HEK293T (cell line): ENCODE measurements at regions of chr5 and their contacts with region 1.

Region 1: DNA sequence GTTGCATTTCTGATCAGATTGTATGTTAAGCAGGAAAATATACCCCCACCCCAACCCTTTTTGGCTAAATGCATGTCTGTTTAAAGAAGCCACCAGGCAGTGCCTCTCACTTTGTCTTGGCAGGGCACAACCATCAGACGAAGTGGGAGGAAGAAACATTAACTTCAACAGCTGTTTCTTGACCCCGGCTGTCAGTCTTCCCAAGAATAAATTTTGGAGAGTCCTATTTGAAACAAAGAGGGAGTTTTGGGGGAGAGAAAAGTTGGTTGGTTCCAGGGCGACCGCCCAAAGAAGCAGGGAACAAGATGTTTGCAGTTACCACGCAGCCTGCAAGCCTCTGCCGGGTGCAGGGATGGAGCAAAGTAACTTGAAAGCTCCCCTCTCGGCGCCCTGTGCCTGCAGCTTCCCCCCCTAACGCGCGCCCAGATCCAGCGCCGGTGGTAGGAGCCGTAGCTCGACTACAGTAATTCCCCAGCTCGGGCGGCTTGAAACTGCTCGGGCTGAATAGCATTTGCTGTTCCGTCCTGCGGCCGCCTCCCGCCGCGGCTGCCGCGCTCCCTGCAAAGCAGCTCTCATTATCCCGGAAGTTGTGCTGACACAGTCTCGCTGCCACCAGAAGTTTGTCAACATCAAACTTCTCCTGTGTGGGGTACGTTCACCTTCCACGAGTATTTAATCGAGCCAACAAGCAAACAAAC is 100.7 kb upstream of the SSBP2 start:
- DNase-seq: peak; percentile 89

Region 2: DNA sequence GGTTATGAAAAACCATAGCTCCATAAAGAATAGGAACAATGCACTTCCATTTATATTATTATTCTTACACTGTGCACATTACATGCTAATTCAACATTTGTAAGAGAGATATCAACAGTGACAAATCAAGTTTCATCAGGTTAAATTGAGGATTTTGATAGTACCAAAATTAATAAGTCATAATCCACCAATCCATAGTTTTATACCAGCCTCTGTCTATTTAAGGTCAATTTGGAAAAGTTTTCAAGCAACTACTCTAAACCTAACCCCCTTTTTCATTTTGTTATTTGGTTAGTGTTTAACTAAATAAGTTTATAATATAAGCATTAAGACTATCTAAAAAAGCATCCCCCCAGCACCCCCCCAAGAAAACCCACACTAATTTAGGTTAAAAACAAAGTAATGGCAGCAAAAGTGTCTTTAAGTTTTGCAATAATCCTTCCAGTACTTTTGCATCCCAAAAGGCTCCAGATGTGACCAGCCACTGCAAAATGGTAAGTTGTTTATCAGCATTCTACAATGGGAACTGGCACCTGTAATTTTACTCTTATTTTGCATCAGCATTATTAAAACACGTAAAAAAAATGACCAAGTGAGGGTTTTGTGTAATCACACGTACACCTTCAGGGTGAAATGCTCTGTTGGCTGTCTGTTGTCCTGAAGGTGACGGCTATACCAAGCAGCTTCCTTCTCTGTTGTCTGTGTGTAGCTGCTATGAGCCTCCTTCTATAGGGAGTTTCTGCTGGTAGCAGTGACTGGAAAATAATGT is 64.0 kb before region 1 on chr5:
- CTCF ChIA-PET with region 1: interaction called, 5 read pairs
- POLR2A ChIA-PET with region 1: interaction called, 60 read pairs
- DNase-seq: no peak

Region 3: GRCh38 chr5:81838307-81838906 is 13.2 kb before region 1 on chr5:
- CTCF ChIA-PET with region 1: interaction called, 16 read pairs
- POLR2A ChIA-PET with region 1: interaction called, 14 read pairs
- DNase-seq: peak; percentile 53

Region 4: DNA sequence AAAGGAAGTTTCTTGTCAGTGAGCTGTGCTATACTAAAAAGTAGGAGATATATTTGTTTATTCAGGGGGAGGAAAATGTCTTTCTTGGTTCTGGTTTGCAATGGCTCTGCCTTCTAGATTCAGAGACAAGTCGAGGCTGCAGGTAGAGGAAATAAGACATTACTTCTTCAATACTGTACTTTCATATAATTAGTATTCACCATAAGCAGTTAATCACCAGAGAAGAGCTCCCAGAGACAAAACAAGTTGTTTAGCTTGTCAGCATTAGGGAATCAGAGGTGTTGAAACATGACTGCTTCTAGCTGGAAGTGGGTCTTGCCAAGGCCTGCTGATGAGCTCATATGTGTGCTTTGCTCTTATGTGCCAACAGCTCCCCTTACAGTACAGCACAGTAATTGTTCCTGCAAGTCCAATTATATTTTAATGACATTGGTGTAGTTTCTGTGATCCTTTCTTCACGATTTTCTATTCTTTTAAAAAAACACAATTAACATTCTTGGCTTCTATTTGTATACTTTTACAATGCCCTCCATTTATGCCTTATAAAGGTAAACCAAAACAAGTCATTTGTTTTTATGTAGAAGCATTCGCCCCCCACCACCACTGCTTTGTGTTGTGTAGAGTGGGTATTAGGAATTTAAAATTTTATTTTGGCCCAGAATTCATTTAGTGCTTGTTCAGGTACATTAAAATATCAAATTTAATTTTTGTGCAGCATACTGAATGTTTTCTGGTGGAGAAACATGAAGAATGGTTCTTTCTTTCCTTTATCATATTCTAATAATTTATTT is 314.3 kb after region 1 on chr5:
- CTCF ChIA-PET with region 1: interaction called, 15 read pairs
- POLR2A ChIA-PET with region 1: interaction called, 8 read pairs
- DNase-seq: peak; percentile 71